ENCODE measurements at regions of chr4 and their contacts with region 1.

Region 1: GRCh38 chr4:6087673-6088341 is 69.6 kb upstream of the C4orf50 start:
- DNase-seq: peak; percentile 73
- H3K4me3 ChIP-seq: peak overlapping the region in 1 of 2 experiments; percentile 30; a peak in 1 of 4 replicates
- H3K27ac ChIP-seq: no peak overlapping the region; a peak in 1 of 4 replicates
- H3K4me1 ChIP-seq: peaks cover 0 to 21% of the 10 kb centered on the region in 2 experiments; a peak in 1 of 4 replicates
- H3K27me3 ChIP-seq: no peaks in the 10 kb centered on the region
- CTCF ChIP-seq: no peak
- EP300 ChIP-seq: no peak
- RAD21 ChIP-seq: peak; percentile 71

Region 2: DNA sequence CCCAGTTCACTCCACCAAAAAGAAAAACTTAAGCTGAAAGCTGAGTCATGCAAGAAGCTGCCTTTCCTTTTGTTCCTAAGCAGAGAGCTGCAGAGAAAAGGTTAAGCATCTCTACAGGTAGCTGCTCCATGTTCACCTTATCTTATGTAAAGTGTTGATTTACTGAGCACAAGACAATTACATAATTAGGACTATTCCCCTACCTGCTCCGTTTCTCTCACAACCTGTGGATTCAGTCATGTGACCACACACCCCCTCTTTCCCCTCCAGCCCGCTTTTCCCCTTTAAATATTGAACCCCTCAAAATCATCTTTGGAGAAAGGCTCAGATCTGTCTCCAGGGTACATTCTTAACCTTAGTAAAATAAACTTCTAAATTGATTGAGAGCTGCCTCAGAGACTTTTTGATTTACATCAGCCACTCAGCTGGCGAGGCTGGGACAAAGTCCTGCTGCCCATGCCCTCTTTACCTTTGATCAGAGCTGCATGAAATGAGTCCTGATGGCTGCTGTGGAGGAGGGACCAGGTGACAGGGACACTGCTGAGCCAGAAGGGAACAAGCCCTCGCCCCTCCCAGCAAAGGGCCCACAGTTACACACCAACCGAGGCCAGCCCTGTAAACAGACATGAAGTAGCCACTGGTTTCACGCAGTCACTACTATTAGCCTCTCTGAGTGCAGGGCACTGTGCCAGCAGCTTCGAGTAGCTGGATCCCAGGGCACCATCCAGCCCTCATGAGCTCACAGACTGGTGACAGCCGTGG is 15.7 kb before region 1 on chr4:
- CTCF ChIA-PET with region 1: interaction called, 11 read pairs
- POLR2A ChIA-PET with region 1: no interaction called
- DNase-seq: peak; percentile 46
- H3K4me3 ChIP-seq: no peak overlapping the region
- H3K27ac ChIP-seq: no peak overlapping the region; a peak in 1 of 4 replicates
- H3K4me1 ChIP-seq: peaks cover 0 to 11% of the 10 kb centered on the region in 2 experiments; a peak in 1 of 4 replicates
- H3K27me3 ChIP-seq: no peaks in the 10 kb centered on the region
- CTCF ChIP-seq: no peak
- EP300 ChIP-seq: no peak
- RAD21 ChIP-seq: no peak

Region 3: DNA sequence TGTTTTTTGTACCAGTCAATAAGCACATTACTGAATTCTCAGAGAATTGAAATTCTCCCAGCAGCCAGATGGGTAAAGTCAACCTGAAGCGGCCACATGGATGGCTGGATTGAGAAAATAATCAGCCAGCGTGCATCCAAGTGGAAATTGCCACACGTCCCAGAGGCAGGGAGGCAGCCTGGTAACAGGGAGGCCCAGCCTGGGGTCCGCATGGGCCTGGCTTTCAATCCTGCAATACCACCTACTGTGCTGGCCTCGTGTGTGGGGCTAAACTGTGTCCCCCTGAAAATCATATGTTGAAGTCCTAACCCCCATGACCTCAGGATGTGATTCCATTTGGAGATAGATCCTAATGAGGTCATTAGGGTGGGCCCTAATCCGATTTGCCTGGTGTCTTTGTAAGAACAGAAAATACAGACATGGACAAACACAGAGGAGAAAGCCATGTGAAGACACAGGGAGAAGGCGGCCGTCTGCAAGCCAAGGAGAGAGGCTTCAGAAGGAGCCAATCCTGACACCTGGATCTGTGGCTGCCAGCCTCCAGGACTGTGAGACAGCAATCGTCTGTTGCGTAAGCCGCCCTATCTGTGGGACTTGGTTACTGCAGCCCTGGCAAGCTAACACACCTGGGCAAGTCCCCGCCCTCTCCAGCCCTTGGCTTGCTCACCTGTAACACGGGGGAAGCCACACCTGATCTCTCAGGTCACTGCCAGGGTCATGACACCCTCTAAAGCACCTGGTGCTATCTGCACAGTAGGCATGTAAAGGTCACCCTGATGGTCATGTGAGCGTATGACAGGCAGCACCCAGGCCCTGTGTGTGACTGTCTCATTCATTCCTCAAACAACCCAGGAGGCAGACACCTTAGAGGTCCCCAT is 22.3 kb after region 1 on chr4:
- CTCF ChIA-PET with region 1: interaction called, 10 read pairs
- POLR2A ChIA-PET with region 1: interaction called, 3 read pairs
- DNase-seq: no peak
- H3K4me3 ChIP-seq: no peak overlapping the region; a peak in 1 of 4 replicates
- H3K27ac ChIP-seq: peak overlapping the region in 1 of 2 experiments; percentile 89; a peak in 2 of 4 replicates
- H3K4me1 ChIP-seq: peaks cover 0 to 72% of the 10 kb centered on the region in 2 experiments; a peak in 2 of 4 replicates
- H3K27me3 ChIP-seq: no peaks in the 10 kb centered on the region
- CTCF ChIP-seq: no peak
- EP300 ChIP-seq: no peak
- RAD21 ChIP-seq: peak; percentile 15; the same call in 1 of the 2 replicates

Measured in SK-N-SH (cell line).